ENCODE measurements at regions of chr1 and their contacts with region 1.

Region 1: GRCh38 chr1:102191723-102192122 is 195.0 kb upstream of the OLFM3 start:
- DNase-seq: no peak
- ATAC-seq: peak in 1 of 2 donors; percentile 42

Region 2: GRCh38 chr1:101520302-101520701 is 671.4 kb before region 1 on chr1:
- intact Hi-C with region 1: loop called in 1 of 2 experiments (anchors 5 kb)
- DNase-seq: peak; percentile 18
- ATAC-seq: peak; percentile 47 to 64

Region 3: DNA sequence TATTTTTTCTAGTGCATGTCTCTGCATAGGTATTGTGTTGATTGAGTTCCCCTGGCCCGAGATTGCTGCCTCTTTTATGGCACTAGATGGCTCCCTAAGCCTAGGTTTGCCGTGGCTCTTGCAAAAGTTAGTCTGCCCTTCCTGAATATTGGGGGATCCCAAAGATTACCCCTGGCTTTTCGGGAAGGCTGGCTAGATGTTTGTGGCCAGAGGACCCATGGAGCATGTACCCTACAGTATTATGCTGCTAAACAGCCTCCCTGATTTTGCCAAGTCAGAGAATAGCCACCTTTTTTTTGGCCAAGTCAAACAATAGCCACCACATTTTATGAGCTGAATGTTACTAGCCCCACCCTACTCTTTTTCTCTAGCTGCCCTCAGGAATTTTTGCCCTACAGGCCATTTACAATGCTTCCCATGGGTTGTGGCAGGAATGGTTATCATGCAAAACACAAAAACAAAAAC is 538.2 kb before region 1 on chr1:
- intact Hi-C with region 1: loop called in 1 of 2 experiments (anchors 5 kb)
- DNase-seq: no peak
- ATAC-seq: no peak

Region 4: GRCh38 chr1:101820071-101820470 is 371.7 kb before region 1 on chr1:
- intact Hi-C with region 1: loop called in 1 of 2 experiments (anchors 5 kb)
- DNase-seq: no peak
- ATAC-seq: peak; percentile 50 to 67